Endothelial cell of umbilical vein (primary cell): ENCODE measurements at regions of chr10 and their contacts with region 1.

Region 1: DNA sequence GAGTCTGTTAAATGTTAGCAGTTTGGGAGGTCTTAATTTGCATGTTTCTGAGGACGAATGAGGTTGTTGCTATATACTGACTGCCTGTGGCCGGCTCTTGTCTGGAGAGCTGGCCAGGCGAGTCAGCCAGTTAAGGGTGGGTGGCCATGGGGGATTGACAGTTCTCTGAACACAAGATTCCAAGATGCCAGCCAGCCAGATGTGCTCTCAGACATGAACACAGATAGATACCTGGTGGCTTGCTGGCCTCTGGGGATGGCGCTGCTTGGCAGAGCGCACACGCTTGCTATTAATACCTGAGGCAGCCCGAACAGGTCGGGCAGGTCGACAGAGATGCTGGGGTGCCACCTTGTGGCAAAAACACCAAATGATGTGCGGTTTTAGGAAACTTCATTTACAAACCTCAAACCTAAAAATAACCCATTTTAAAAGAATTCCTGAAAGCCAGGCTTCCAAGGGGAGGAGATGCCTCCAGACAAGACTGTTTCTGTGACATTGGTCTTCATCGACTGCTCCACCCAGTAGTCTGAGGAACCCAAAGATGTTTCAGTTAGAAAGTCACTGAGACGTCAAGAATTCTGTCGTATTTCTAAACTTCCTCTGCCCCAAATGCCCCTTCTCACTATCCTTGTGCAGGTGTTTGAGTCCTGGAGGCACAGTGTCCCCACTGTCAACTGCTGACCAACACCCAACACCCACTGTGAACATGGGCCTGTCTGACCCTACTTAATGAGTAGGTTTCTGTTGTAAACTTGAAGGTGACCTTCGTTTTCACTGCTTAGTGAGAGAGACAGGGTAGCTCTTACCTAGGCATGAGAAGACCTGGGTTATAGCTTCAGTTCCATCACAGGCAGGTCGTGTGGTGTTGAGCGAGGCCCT is 123.4 kb downstream of the NT5C2 start:
- DNase-seq: peak; percentile 56
- H3K4me3 ChIP-seq: no peak overlapping the region
- H3K27ac ChIP-seq: no peak overlapping the region
- H3K4me1 ChIP-seq: peaks cover 2% of the 10 kb centered on the region
- H3K27me3 ChIP-seq: no peaks in the 10 kb centered on the region
- CTCF ChIP-seq: peak; percentile 49 to 55
- POLR2A ChIP-seq: no peak

Region 2: GRCh38 chr10:102540023-102540422 is 529.7 kb before region 1 on chr10:
- CTCF ChIA-PET with region 1: no interaction called
- POLR2A ChIA-PET with region 1: no interaction called
- dilution Hi-C with region 1: no loop called
- intact Hi-C with region 1: no loop called
- DNase-seq: peak; percentile 10
- H3K4me3 ChIP-seq: no peak overlapping the region
- H3K27ac ChIP-seq: no peak overlapping the region
- H3K4me1 ChIP-seq: no peaks in the 10 kb centered on the region
- H3K27me3 ChIP-seq: no peaks in the 10 kb centered on the region
- CTCF ChIP-seq: peak; percentile 15 to 40
- POLR2A ChIP-seq: no peak

Region 3: DNA sequence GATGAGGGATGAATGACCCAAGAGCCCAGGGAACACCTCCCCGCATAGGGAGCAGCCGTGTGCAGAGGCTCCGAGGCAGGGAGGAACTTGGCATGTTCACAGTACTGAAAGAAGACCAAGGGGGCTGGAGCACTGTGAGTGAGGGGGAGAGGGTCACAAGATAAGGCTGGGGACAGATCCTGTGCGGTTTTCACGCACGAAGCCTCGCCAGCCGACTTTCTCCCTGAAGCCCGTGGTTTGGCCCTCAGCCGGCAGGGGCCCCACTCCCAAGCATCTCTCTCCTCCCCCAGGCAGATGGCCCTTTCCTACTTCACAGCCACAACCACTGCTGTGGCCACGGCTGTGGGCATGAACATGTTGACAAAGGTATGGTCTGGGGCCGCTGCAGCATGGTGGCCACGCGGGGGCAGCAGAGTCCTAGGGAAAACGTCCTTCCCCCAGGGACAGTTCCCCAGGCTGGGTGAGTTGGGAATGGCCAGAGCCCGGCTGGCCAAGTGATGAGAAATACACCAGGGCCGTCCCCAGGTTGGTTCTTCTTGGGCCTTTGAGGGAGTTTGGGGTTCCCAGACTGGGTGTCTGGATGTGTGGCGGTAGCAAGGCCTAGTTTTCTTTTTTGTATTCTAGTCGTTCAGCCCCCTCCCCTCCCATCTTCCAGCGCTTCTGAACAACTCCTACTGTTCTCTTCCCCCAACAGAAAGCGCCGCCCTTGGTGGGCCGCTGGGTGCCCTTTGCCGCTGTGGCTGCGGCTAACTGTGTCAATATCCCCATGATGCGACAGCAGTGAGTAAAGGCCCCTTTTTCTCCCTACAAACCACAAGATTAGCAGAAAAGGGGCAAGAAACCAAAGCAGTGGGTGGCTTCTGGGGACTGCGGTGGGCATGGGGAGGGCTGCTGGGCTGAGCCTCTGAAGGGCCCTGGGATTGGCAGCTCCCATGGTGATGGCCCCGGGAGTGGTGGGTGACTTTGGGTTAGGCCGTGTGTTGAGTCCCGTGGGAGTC is 340.4 kb before region 1 on chr10:
- CTCF ChIA-PET with region 1: interaction called, 3 read pairs
- POLR2A ChIA-PET with region 1: no interaction called
- dilution Hi-C with region 1: no loop called
- intact Hi-C with region 1: loop called (anchors 1 kb)
- DNase-seq: peak; percentile 78
- H3K4me3 ChIP-seq: no peak overlapping the region
- H3K27ac ChIP-seq: no peak overlapping the region
- H3K4me1 ChIP-seq: no peaks in the 10 kb centered on the region
- H3K27me3 ChIP-seq: no peaks in the 10 kb centered on the region
- CTCF ChIP-seq: peak; percentile 90 to 92
- POLR2A ChIP-seq: no peak